GM12878 (cell line): ENCODE measurements at regions of chr11 and their contacts with region 1.

Region 1: DNA sequence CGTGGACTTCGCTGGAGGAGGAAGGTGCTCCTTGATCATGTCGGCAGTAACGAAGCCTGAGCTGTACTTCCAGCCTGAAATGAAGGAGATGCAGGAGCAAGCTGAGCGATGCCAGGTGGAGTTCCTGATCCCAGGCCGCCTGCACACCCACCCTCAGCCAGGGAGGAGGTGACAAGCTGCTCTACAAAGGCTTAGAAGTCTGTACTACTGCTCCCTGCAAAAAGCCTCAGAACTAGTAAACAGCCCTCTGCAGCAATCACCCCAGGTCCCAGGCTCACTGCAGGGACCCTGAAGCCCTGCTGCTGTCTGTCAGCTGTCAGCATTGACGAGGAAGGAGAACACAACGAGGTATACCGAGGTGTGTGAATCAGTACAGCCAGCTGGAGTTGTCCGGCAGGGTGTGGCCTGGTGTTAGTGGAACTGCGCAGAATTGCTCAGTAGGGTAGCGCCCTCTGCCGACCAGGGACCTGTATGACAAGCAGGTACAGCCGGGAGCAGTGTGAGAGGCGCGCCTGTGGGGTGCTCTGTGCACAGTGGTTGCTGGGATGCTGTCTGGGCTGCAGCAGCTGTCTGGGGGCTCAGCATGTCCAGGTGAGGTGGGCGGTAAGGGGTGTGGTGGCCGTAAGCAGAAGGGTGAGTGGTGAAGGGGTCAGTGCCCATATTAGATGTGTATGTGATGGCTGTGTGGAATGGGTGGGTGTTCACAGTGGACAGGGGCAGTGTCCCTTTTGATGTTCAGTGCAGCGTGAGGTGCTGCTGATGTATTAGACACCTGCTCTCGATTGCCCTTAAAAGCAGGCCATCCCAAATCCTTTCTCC is 7.6 kb downstream of the CYB5R2 start:
- DNase-seq: peak; percentile 34
- ATAC-seq: peak; percentile 100
- H3K4me3 ChIP-seq: no peak overlapping the region
- H3K27ac ChIP-seq: no peak overlapping the region
- H3K4me1 ChIP-seq: peaks cover 11% of the 10 kb centered on the region
- H3K27me3 ChIP-seq: no peaks in the 10 kb centered on the region
- CTCF ChIP-seq: peak; percentile 94 to 97 (median 96)
- EP300 ChIP-seq: no peak
- POLR2A ChIP-seq: peak; percentile 62
- RAD21 ChIP-seq: peak; percentile 86

Region 2: DNA sequence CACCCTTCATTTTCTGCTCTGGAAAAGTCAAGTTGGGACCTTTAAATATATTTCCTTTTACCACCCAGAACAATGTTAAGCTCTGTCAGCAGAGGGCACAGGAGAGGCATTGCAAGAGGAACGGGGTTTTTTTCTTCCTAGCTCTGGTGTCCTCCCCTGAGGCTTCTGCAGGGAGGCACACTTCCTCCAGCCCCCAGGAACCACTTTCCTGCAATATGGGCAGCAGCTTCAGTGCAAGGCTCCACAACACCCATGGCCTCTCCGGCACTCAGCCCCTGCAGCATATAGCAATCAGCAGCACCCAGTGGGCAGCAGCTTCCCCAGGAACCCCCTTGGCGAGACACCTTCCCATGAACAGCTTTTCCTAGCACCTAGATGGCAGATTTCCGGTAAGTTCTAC is 312.6 kb before region 1 on chr11:
- CTCF ChIA-PET with region 1: interaction called, 25 read pairs
- POLR2A ChIA-PET with region 1: no interaction called
- RAD21 ChIA-PET with region 1: interaction called, 12 read pairs
- SMC1A ChIA-PET with region 1: interaction called, 8 read pairs
- in situ Hi-C with region 1: no loop called
- intact Hi-C with region 1: loop called (anchors 1 kb)
- DNase-seq: peak; percentile 7
- ATAC-seq: peak; percentile 89
- H3K4me3 ChIP-seq: no peak overlapping the region
- H3K27ac ChIP-seq: no peak overlapping the region
- H3K4me1 ChIP-seq: no peaks in the 10 kb centered on the region
- H3K27me3 ChIP-seq: no peaks in the 10 kb centered on the region
- CTCF ChIP-seq: peak; percentile 57 to 75 (median 70)
- EP300 ChIP-seq: no peak
- POLR2A ChIP-seq: no peak
- RAD21 ChIP-seq: peak; percentile 84

Region 3: DNA sequence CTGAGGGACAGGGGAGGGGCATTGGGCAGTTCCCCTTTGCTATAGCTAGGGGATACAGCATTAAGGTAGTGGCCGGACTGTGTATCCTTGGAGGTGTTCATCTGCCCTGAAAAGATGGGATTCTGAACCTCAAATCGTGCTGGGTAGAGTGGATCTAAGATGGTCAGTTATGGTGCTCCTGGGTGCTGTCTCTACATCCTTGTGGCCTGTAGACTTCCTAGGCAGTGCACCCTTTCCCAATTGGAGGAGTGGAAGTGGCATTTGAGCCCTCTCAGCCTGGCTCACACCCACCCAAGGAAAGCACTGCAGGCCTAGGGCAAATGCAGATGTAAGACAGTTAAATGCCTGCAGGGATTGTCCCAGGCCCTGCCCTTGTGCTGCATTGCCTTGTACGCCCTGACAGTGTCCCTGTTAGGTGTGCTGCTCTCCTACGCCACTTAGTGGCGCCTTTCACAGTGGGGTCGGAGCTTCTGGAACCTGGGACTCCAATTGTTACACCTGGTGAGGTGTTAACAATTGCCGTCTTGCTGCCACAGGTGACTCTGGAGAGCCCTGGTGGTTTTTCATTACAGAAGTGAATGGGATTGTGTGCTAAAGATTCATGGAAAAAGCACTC is 116.9 kb before region 1 on chr11:
- CTCF ChIA-PET with region 1: interaction called, 5 read pairs
- POLR2A ChIA-PET with region 1: no interaction called
- RAD21 ChIA-PET with region 1: interaction called, 4 read pairs
- SMC1A ChIA-PET with region 1: interaction called, 4 read pairs
- in situ Hi-C with region 1: no loop called
- intact Hi-C with region 1: loop called (anchors 2 kb)
- DNase-seq: no peak
- ATAC-seq: peak; percentile 97
- H3K4me3 ChIP-seq: no peak overlapping the region
- H3K27ac ChIP-seq: no peak overlapping the region; the same call in 1 of the 2 replicates
- H3K4me1 ChIP-seq: peaks cover 7% of the 10 kb centered on the region
- H3K27me3 ChIP-seq: no peaks in the 10 kb centered on the region
- CTCF ChIP-seq: peak; percentile 70 to 75 (median 74)
- EP300 ChIP-seq: no peak
- POLR2A ChIP-seq: no peak
- RAD21 ChIP-seq: peak; percentile 79

Region 4: GRCh38 chr11:7577291-7578190 is 88.1 kb before region 1 on chr11:
- CTCF ChIA-PET with region 1: interaction called, 16 read pairs
- POLR2A ChIA-PET with region 1: interaction called, 3 read pairs
- RAD21 ChIA-PET with region 1: interaction called, 8 read pairs
- SMC1A ChIA-PET with region 1: interaction called, 6 read pairs
- in situ Hi-C with region 1: no loop called
- intact Hi-C with region 1: loop called (anchors 5 kb)
- DNase-seq: no peak
- ATAC-seq: no peak
- H3K4me3 ChIP-seq: no peak overlapping the region
- H3K27ac ChIP-seq: 0 out of 2 replicates have a peak overlapping the region, but pooled peaks have one; percentile 14
- H3K4me1 ChIP-seq: peaks cover 41% of the 10 kb centered on the region
- H3K27me3 ChIP-seq: no peaks in the 10 kb centered on the region
- CTCF ChIP-seq: no peak
- EP300 ChIP-seq: no peak
- POLR2A ChIP-seq: no peak
- RAD21 ChIP-seq: no peak

Region 5: DNA sequence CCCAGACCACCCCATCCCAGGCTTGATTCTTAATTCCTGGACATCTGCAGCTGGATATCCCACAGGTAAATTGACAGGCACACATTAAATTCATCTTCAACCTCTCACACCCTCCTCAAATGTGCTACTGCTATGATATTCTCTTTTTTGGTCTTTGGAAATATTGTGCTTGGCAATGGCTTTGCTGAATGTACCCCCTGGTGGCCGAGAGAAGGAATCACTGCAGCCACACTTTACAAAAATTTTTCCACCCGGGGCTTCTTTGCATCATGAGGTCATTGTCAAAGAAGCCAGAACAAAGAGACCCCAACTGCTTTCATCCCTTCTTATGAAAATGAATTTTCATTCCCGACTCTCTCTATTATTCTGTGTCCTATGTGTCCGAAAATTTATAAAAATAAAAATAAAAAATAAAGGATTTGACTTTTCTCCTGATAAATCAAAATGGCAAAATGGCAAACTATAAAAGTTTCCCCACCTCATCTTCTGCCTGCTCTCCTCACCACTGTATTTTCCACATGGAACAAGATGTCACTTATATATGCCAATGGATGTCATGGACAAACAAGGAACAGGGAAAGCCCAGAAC is 22.6 kb after region 1 on chr11:
- CTCF ChIA-PET with region 1: interaction called, 30 read pairs
- POLR2A ChIA-PET with region 1: interaction called, 3 read pairs
- RAD21 ChIA-PET with region 1: interaction called, 4 read pairs
- SMC1A ChIA-PET with region 1: interaction called, 9 read pairs
- in situ Hi-C with region 1: no loop called
- intact Hi-C with region 1: no loop called
- DNase-seq: no peak
- ATAC-seq: peak; percentile 84
- H3K4me3 ChIP-seq: no peak overlapping the region
- H3K27ac ChIP-seq: no peak overlapping the region
- H3K4me1 ChIP-seq: no peaks in the 10 kb centered on the region
- H3K27me3 ChIP-seq: peaks cover 0 to 2% of the 10 kb centered on the region in 2 experiments; a peak in 2 of 4 replicates
- CTCF ChIP-seq: peak; percentile 76 to 80 (median 79)
- EP300 ChIP-seq: no peak
- POLR2A ChIP-seq: no peak
- RAD21 ChIP-seq: peak; percentile 80

Region 6: GRCh38 chr11:7749456-7749855 is 83.8 kb after region 1 on chr11:
- CTCF ChIA-PET with region 1: no interaction called
- POLR2A ChIA-PET with region 1: no interaction called
- RAD21 ChIA-PET with region 1: no interaction called
- SMC1A ChIA-PET with region 1: no interaction called
- in situ Hi-C with region 1: no loop called
- intact Hi-C with region 1: no loop called
- DNase-seq: no peak
- ATAC-seq: no peak
- H3K4me3 ChIP-seq: no peak overlapping the region
- H3K27ac ChIP-seq: no peak overlapping the region
- H3K4me1 ChIP-seq: no peaks in the 10 kb centered on the region
- H3K27me3 ChIP-seq: no peaks in the 10 kb centered on the region
- CTCF ChIP-seq: no peak
- EP300 ChIP-seq: no peak
- POLR2A ChIP-seq: no peak
- RAD21 ChIP-seq: no peak